ENCODE measurements at regions of chr2 and their contacts with region 1.

Region 1: GRCh38 chr2:204967199-204967960 is 422.1 kb downstream of the PARD3B start:
- DNase-seq: no peak
- ATAC-seq: no peak
- H3K4me3 ChIP-seq: no peak overlapping the region
- H3K27ac ChIP-seq: no peak overlapping the region
- H3K4me1 ChIP-seq: no peaks in the 10 kb centered on the region
- H3K27me3 ChIP-seq: no peaks in the 10 kb centered on the region
- CTCF ChIP-seq: no peak

Region 2: DNA sequence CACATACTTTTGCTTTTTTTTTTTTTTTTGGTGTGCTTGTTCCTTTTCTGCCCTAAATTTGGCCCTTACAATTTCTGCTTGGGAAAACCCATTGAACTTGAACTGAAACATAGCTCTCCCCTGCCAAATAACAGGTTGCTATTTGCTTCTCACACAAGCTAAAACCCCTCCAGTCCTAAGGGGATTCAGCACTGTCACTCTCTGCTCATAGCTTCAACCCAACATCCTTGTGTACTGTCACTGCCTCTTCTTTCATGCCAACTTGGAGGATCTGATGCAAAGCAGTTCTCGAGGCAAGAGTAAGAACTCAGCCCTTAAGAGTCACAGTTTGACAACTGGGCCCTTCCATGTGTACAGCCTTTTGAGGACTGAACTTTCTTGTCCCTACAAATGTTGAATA is 684.3 kb after region 1 on chr2:
- CTCF ChIA-PET with region 1: no interaction called
- POLR2A ChIA-PET with region 1: interaction called, 12 read pairs
- in situ Hi-C with region 1: no loop called
- intact Hi-C with region 1: no loop called
- DNase-seq: no peak
- ATAC-seq: no peak
- H3K4me3 ChIP-seq: no peak overlapping the region
- H3K27ac ChIP-seq: no peak overlapping the region
- H3K4me1 ChIP-seq: no peaks in the 10 kb centered on the region
- H3K27me3 ChIP-seq: no peaks in the 10 kb centered on the region
- CTCF ChIP-seq: no peak